Activated naive CD4-positive, alpha-beta T cell treated with anti-CD3 and anti-CD28 coated beads for 36 hours (primary cell): ENCODE measurements at regions of chr4 and their contacts with region 1.

Region 1: DNA sequence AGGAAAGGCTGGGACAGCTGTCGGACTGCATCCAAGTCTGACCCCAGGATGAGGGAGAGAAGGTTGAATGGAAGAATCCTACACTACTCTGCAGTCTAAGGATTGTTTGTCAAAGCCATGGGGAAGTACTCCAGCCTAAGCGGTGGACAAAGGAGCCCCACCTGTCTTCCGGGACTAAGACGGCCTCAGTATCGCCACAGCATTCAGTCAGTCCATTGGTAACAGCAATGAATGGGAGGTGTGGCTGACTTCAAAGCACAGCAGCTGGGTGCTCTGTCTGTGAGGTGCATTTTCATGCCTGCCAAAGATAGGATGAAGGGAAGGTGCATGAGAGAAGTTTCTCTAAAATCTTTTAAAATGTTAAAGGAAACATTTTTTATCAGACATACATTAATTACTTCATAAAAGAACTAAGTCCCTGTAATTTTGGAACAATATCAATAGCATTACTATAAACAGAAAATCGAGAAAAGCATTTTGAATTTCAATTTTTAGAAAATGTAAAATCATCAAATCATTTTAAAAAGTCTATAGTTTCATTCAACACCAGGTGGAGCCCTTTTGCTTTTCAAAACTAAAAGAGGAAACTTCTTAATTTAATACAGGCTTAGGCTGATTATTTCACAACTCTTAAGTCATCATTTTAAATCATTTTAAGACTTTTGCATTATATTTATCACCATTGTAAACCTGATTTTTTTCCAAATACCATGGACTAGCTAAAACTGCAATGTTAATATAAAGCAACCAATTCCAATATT is 27.6 kb upstream of the INTU start:
- DNase-seq: no peak
- H3K4me3 Mint-ChIP-seq: no peak overlapping the region
- H3K27ac Mint-ChIP-seq: no peak overlapping the region
- H3K4me1 Mint-ChIP-seq: no peaks in the 10 kb centered on the region
- H3K27me3 Mint-ChIP-seq: peaks cover 21% of the 10 kb centered on the region

Region 2: GRCh38 chr4:127732613-127733328 is 127.6 kb after region 1 on chr4:
- CTCF ChIA-PET with region 1: interaction called, 8 read pairs
- intact Hi-C with region 1: loop called (anchors 1 kb)
- DNase-seq: no peak
- H3K4me3 Mint-ChIP-seq: no peak overlapping the region
- H3K27ac Mint-ChIP-seq: no peak overlapping the region
- H3K4me1 Mint-ChIP-seq: no peaks in the 10 kb centered on the region
- H3K27me3 Mint-ChIP-seq: peaks cover 7% of the 10 kb centered on the region

Region 3: DNA sequence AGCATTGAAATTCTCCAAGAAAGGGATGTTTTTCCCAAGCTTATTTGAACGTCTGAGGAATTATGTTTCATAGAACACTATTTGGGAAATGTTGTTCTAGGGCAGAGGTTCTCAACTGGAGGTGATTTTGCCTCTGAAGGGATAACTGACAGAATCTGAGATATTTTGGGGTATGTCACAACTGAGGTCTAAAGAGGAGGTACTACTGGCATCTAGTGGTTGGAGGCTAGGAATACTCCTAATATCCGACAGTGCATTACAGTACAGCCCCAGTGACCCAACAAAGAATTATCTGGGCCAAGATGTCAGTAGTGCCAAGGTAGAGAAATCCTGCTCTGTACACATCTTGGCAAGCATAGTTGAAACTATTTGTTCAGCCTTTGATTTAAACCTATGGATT is 183.4 kb after region 1 on chr4:
- CTCF ChIA-PET with region 1: no interaction called
- intact Hi-C with region 1: loop called (anchors 1 kb)
- DNase-seq: no peak
- H3K4me3 Mint-ChIP-seq: no peak overlapping the region
- H3K27ac Mint-ChIP-seq: no peak overlapping the region
- H3K4me1 Mint-ChIP-seq: peaks cover 5% of the 10 kb centered on the region
- H3K27me3 Mint-ChIP-seq: peaks cover 44% of the 10 kb centered on the region

Region 4: DNA sequence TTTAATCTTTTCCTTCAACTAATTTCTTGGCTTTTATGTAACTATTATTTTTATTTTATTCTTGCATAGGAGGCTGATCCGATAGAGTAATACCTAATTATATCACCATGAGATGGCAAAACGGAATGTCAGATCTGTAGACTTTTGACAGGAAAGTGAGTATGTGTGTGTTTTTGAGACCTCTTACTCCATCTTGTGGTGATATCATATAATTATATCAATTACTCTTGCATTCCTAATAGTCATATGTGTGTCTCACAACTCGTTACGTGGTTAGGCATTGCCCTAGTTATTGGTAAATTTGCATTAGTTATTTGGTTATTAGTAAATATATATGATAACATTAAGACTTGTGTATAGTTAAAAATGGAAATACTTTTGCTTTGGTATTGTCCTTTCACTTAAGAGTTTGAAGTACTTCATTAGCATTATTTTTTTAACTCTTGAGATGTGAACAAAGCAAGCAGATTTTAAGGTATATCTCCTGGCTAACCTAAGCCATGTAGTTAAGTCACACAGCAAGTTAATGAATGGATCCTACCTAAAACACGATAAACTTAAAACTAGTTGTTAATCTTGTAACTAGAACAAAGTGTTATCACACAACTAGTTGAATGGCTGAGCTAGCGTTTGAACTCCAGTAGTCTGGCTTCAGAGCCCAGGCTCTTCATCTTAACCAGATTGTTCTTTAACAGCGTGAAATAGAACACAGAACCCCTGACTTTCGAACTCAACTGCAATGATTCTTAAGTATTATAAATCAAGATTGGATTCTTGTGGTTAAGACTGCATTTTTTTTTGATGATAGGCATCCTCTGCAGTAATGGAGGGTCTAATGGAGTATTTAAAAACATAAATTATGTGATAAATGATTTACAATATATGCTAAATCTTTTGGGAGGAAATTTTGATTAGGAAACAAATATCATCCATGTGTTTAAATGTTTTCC is 615.4 kb after region 1 on chr4:
- CTCF ChIA-PET with region 1: no interaction called
- intact Hi-C with region 1: loop called (anchors 2 kb)
- DNase-seq: no peak
- H3K4me3 Mint-ChIP-seq: no peak overlapping the region
- H3K27ac Mint-ChIP-seq: no peak overlapping the region
- H3K4me1 Mint-ChIP-seq: no peaks in the 10 kb centered on the region
- H3K27me3 Mint-ChIP-seq: no peaks in the 10 kb centered on the region

Region 5: GRCh38 chr4:128600410-128600809 is 995.3 kb after region 1 on chr4:
- CTCF ChIA-PET with region 1: no interaction called
- intact Hi-C with region 1: no loop called
- DNase-seq: no peak
- H3K4me3 Mint-ChIP-seq: no peak overlapping the region
- H3K27ac Mint-ChIP-seq: no peak overlapping the region
- H3K4me1 Mint-ChIP-seq: no peaks in the 10 kb centered on the region
- H3K27me3 Mint-ChIP-seq: peaks cover 11% of the 10 kb centered on the region